ENCODE measurements at regions of chr16 and their contacts with region 1.

Region 1: DNA sequence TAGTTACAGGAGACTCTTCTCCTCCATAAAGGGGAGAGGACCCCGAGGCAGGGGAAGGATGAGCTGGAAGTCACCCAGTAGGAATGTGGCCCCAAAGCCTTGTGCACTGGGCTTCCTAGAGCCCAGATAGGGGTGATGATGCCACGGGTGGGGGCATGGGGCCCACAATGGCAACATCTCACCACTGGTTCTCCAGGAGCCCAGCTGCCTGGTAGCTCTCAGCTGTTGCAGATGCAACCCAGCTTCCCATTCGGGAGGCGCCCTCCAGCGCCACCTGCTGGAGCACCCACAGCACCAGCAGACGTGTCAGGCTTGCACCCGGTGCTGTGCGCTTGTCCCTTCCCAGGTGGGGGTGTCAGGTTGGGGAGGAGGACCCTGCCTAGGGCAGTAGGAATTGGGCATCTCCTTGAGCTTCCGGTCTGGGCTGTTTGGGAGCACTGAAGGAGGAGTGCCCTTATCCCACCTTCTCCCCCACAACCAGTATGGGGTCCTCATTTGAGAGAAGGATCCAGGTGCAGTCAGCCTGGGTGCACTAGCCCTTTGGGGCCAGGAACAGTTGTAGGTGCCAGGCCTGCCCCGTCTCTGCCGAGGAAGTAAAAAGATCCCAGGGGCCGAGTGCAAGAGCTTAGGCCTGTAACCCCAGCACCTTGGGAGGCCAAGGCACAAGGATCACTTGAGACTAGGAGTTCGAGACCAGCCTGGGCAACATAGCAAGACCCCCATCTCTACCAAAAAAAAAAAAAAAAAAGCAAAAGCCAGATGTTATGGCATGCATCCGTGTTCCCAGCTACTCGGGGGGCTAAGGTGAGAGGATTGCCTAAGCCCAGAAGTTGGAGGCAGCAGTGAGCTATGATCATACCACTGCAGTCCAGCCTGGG is 14.4 kb downstream of the CDIPT start:
- DNase-seq: peak; percentile 86
- ATAC-seq: peak; percentile 96
- H3K4me3 Mint-ChIP-seq: no peak overlapping the region
- H3K27ac Mint-ChIP-seq: no peak overlapping the region
- H3K4me1 Mint-ChIP-seq: no peaks in the 10 kb centered on the region
- H3K27me3 Mint-ChIP-seq: no peaks in the 10 kb centered on the region
- CTCF ChIP-seq: peak; percentile 93

Region 2: GRCh38 chr16:29315615-29316517 is 532.8 kb before region 1 on chr16:
- CTCF ChIA-PET with region 1: no interaction called
- POLR2A ChIA-PET with region 1: no interaction called
- intact Hi-C with region 1: no loop called
- DNase-seq: no peak
- ATAC-seq: no peak
- H3K4me3 Mint-ChIP-seq: no peak overlapping the region
- H3K27ac Mint-ChIP-seq: no peak overlapping the region
- H3K4me1 Mint-ChIP-seq: peaks cover 3% of the 10 kb centered on the region
- H3K27me3 Mint-ChIP-seq: no peaks in the 10 kb centered on the region
- CTCF ChIP-seq: no peak

Region 3: DNA sequence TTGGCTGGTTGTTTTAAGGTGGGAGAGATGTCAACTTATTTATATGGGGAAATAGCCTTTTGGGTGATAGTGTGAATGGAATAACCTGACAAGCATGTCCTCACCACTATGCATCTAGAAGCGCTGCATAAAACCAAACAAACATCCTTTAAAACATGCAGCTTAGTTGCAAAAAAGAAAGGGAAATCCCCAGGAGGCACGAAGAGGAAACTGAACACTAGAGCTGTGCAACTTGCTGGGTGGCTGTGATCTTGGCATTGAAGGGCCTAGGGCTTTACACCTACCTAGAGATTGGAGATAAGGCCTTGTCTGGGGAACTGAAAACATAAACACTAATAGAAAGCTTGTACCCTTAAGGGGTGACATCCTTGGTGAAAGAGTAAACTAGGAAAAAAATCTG is 110.1 kb before region 1 on chr16:
- CTCF ChIA-PET with region 1: no interaction called
- POLR2A ChIA-PET with region 1: no interaction called
- intact Hi-C with region 1: no loop called
- DNase-seq: peak; percentile 59
- ATAC-seq: peak; percentile 89
- H3K4me3 Mint-ChIP-seq: no peak overlapping the region
- H3K27ac Mint-ChIP-seq: peak overlapping the region; percentile 89
- H3K4me1 Mint-ChIP-seq: peaks cover 70% of the 10 kb centered on the region
- H3K27me3 Mint-ChIP-seq: no peaks in the 10 kb centered on the region
- CTCF ChIP-seq: no peak

Region 4: DNA sequence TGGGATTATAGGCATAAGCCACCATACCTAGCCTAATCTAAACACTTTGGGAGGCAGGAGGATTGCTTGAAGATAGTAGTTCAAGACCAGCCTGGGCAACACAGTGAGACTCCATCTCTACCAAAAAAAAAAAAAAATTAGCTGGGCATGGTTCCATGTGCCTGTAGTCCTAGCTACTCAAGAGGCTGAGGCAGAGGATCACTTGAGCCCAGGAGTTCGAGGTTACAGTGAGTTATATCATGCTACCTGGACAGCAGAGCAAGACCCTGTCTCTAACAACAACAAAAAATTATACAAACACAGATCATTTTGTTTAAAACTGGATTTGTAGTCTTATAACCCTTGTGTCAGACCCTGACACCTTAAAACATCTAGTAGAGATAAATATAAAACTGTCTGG is 95.1 kb before region 1 on chr16:
- CTCF ChIA-PET with region 1: interaction called, 12 read pairs
- POLR2A ChIA-PET with region 1: no interaction called
- intact Hi-C with region 1: no loop called
- DNase-seq: no peak
- ATAC-seq: no peak
- H3K4me3 Mint-ChIP-seq: no peak overlapping the region
- H3K27ac Mint-ChIP-seq: peak overlapping the region; percentile 18
- H3K4me1 Mint-ChIP-seq: peaks cover 24% of the 10 kb centered on the region
- H3K27me3 Mint-ChIP-seq: no peaks in the 10 kb centered on the region
- CTCF ChIP-seq: no peak

Region 5: GRCh38 chr16:29805378-29806098 is 43.1 kb before region 1 on chr16:
- CTCF ChIA-PET with region 1: interaction called, 27 read pairs
- POLR2A ChIA-PET with region 1: interaction called, 29 read pairs
- intact Hi-C with region 1: no loop called
- DNase-seq: peak; percentile 99
- ATAC-seq: peak; percentile 74
- H3K4me3 Mint-ChIP-seq: peak overlapping the region; percentile 90
- H3K27ac Mint-ChIP-seq: peak overlapping the region; percentile 96
- H3K4me1 Mint-ChIP-seq: peaks cover 27% of the 10 kb centered on the region
- H3K27me3 Mint-ChIP-seq: no peaks in the 10 kb centered on the region
- CTCF ChIP-seq: no peak

Region 6: GRCh38 chr16:29825145-29826044 is 23.3 kb before region 1 on chr16:
- CTCF ChIA-PET with region 1: interaction called, 95 read pairs
- POLR2A ChIA-PET with region 1: interaction called, 8 read pairs
- intact Hi-C with region 1: no loop called
- DNase-seq: peak; percentile 76
- ATAC-seq: peak; percentile 60
- H3K4me3 Mint-ChIP-seq: peak overlapping the region; percentile 22
- H3K27ac Mint-ChIP-seq: peak overlapping the region; percentile 87
- H3K4me1 Mint-ChIP-seq: peaks cover 75% of the 10 kb centered on the region
- H3K27me3 Mint-ChIP-seq: no peaks in the 10 kb centered on the region
- CTCF ChIP-seq: no peak

Region 7: DNA sequence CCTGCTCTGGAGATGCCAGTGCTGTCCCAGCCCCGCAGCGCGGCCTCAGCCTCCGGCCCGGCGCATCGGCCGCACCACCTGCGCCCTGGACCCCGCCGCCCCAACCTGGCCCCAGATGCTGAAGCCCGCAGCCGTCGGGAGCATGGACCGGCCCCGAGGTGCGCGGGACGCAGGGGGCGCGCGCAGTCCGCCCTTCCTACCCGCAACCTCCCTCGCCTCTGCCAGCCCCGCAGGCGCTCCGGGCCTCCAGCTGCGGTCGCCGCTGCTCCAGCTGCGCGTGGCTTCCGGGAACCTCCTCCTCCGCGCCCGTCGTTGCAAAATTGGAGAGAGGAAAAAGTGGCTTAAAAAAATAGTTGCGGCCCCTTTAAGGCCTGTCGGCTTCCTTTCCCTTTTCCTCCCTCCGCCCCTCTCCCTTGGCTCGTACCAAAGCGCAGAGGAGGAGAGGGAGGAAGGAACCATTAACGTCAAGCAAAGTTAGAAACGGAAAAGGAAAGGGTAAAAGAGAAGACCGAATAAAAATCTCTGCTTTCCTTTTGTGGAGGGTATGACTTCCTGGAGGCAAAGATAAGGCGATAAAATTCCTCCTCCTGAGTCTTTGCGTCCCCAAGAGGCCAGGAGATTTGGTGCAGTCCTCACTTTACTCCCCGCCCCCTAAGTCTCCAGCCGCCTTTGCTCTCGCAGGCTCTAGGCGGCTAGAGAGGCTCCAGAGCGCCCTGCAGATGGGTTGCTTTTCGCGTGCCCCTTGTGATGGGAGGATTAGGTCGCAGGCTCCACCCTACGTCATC is 14.4 kb after region 1 on chr16 and contains the start of gene CDIPT:
- CTCF ChIA-PET with region 1: interaction called, 24 read pairs
- POLR2A ChIA-PET with region 1: interaction called, 3 read pairs
- intact Hi-C with region 1: no loop called
- DNase-seq: peak; percentile 96
- ATAC-seq: peak; percentile 99
- H3K4me3 Mint-ChIP-seq: peak within 1 kb of the TSS; percentile 88
- H3K27ac Mint-ChIP-seq: peak within 1 kb of the TSS; percentile 97
- H3K4me1 Mint-ChIP-seq: peaks cover 18% of the 10 kb centered on the region
- H3K27me3 Mint-ChIP-seq: no peaks in the 10 kb centered on the region
- CTCF ChIP-seq: peak; percentile 66
- total RNA-seq, gene CDIPT: 30.2 to 35.4 TPM

Region 8: GRCh38 chr16:29951625-29952365 is 103.1 kb after region 1 on chr16:
- CTCF ChIA-PET with region 1: no interaction called
- POLR2A ChIA-PET with region 1: no interaction called
- intact Hi-C with region 1: no loop called
- DNase-seq: no peak
- ATAC-seq: no peak
- H3K4me3 Mint-ChIP-seq: no peak overlapping the region
- H3K27ac Mint-ChIP-seq: no peak overlapping the region
- H3K4me1 Mint-ChIP-seq: no peaks in the 10 kb centered on the region
- H3K27me3 Mint-ChIP-seq: peaks cover 2% of the 10 kb centered on the region
- CTCF ChIP-seq: no peak

Region 9: GRCh38 chr16:30032083-30032819 is 183.6 kb after region 1 on chr16:
- CTCF ChIA-PET with region 1: interaction called, 13 read pairs
- POLR2A ChIA-PET with region 1: no interaction called
- intact Hi-C with region 1: no loop called
- DNase-seq: peak; percentile 79
- ATAC-seq: peak; percentile 57
- H3K4me3 Mint-ChIP-seq: no peak overlapping the region
- H3K27ac Mint-ChIP-seq: no peak overlapping the region
- H3K4me1 Mint-ChIP-seq: peaks cover 2% of the 10 kb centered on the region
- H3K27me3 Mint-ChIP-seq: peaks cover 46% of the 10 kb centered on the region
- CTCF ChIP-seq: peak; percentile 87

Measured in activated CD8-positive, alpha-beta T cell treated with anti-CD3 and anti-CD28 coated beads for 36 hours (primary cell).